KBM-7 (cell line): ENCODE measurements at regions of chr19 and their contacts with region 1.

Region 1: DNA sequence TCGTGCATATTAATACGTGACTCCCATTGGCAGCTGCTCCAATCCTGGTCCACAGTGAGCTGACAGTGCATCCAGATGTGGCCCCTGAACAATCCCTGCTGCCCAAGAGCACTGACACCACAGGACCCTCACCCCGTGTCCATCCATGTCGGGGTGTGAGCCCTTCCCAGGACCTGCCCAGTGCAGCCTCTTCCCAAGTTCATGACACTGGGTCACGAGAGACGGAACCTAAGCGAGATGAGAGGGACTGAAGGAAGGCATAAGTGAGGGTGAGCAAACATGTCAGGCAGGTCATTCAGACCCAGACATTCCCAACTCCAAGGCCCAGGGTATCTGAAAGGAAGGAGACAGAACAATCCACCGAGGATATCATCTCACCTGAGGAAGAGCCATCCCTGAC is 3.5 kb downstream of the ZNF468 start:
- DNase-seq: no peak

Region 2: DNA sequence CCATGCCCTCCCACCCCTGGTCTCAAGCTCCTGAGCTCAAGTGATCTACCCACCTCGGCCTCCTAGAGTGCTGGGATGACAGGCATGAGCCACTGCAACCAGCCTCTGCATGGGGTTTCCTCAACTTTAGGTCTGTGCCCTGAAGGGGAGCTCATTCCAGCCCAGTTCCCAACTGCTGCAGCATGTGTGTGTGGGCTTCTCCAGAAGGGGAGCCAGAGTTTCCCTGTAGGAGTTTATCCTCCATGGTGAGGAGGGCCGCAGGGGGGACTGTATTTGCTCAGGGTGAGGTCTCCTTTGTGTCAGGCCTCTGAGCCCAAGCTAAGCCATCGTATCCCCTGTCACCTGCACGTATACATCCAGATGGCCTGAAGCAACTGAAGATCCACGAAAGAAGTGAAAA is 337.7 kb before region 1 on chr19:
- in situ Hi-C with region 1: loop called (anchors 5 kb)
- DNase-seq: no peak